CD4-positive, alpha-beta memory T cell (primary cell): ENCODE measurements at regions of chr6 and their contacts with region 1.

Region 1: GRCh38 chr6:96897383-96898240 is at the start of gene NDUFAF4:
- DNase-seq: peak; percentile 94 to 95 (median 94)
- H3K4me3 ChIP-seq: peak within 1 kb of the TSS; percentile 92 to 96
- H3K4me3 Mint-ChIP-seq: peak within 1 kb of the TSS; percentile 86 to 99 (median 98)
- H3K27ac ChIP-seq: peak within 1 kb of the TSS; percentile 92
- H3K27ac Mint-ChIP-seq: peak within 1 kb of the TSS; percentile 73 to 99 (median 98)
- H3K4me1 ChIP-seq: peaks cover 34% of the 10 kb centered on the region
- H3K4me1 Mint-ChIP-seq: peaks cover 17 to 31% (median 23%) of the 10 kb centered on the region in 4 donors
- H3K27me3 ChIP-seq: no peaks in the 10 kb centered on the region
- H3K27me3 Mint-ChIP-seq: peaks cover 2 to 11% of the 10 kb centered on the region in 2 donors
- total RNA-seq, gene NDUFAF4: 24.3 to 27.5 TPM

Region 2: DNA sequence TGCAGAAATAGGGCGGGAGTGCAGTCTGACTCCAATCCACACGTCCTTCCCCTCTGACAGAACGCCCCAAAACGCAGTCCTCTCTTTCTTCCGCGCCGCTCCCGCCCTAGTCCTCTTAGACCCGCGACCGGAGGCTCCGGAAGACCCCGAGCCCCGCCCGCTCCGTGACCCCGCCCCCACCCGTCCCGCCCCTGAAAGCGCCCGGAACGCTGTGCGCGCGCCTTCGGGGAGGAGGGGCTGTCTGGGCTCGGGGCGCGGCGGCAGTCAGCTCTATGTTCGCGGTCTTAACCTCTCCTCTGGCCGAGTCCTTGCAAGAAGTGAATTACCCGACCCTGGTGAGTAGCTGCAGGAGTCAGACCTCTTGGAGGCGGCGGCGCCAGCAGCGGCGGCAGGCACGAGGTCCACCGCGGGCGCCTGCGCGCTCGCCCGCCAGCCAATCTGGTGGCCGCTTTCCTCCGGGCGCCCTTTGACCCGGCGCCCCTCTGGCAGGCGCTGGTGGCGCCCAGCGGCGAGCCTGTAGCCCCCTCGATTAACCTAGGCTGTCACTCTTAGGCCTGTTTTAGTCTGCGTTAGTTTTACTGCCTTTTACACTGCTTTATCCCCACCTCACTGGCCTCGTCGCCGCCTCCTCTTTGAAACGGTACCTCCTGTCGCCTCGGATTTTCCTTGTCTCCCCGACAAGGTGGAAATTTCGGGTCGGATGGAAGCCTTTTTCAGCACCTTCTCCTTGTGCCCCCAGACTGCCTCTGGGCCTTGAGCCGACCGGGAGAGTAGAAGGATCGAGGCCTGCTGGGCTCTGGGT is 1320.1 kb before region 1 on chr6 and contains the start of gene MANEA:
- CTCF ChIA-PET with region 1: no interaction called
- POLR2A ChIA-PET with region 1: no interaction called
- intact Hi-C with region 1: loop called (anchors 1 kb)
- DNase-seq: peak; percentile 81 to 87 (median 82)
- H3K4me3 ChIP-seq: peak within 1 kb of the TSS; percentile 90 to 98
- H3K4me3 Mint-ChIP-seq: peak within 1 kb of the TSS; percentile 94 to 98 (median 97)
- H3K27ac ChIP-seq: peak within 1 kb of the TSS; percentile 86
- H3K27ac Mint-ChIP-seq: peak within 1 kb of the TSS; percentile 94 to 99 (median 97)
- H3K4me1 ChIP-seq: peaks cover 54% of the 10 kb centered on the region
- H3K4me1 Mint-ChIP-seq: peaks cover 32 to 70% (median 46%) of the 10 kb centered on the region in 4 donors
- H3K27me3 ChIP-seq: no peaks in the 10 kb centered on the region
- H3K27me3 Mint-ChIP-seq: no peaks in the 10 kb centered on the region
- total RNA-seq, gene MANEA: 12.2 to 13.0 TPM

Region 3: DNA sequence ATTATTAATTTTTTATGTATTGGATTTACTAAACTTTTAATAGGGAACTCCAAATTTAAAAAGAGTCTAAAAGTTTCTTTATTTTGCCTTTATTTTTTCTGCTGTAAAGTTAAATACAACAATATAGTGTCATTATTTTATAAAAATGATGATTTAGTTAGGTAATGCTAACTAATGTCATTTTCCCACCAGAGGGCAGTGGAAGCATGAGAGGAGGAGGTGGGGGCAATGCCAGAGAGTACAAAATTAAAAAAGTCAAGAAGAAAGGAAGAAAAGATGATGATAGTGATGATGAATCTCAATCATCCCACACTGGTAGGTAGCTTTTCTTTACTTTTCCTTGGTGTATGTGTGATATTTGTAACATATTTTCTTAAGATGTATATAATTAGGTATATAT is 354.9 kb before region 1 on chr6:
- CTCF ChIA-PET with region 1: no interaction called
- POLR2A ChIA-PET with region 1: no interaction called
- intact Hi-C with region 1: loop called (anchors 1 kb)
- DNase-seq: peak in 3 of 5 donors; percentile 7 to 16 (median 10)
- H3K4me3 ChIP-seq: no peak overlapping the region
- H3K4me3 Mint-ChIP-seq: no peak overlapping the region
- H3K27ac ChIP-seq: no peak overlapping the region
- H3K27ac Mint-ChIP-seq: peak overlapping the region in 1 of 7 donors; percentile 45
- H3K4me1 ChIP-seq: no peaks in the 10 kb centered on the region
- H3K4me1 Mint-ChIP-seq: peaks cover 0 to 2% (median 0%) of the 10 kb centered on the region in 4 donors
- H3K27me3 ChIP-seq: no peaks in the 10 kb centered on the region
- H3K27me3 Mint-ChIP-seq: no peaks in the 10 kb centered on the region

Region 4: GRCh38 chr6:96837081-96837971 is 60.3 kb before region 1 on chr6 and contains the start of gene GPR63:
- CTCF ChIA-PET with region 1: interaction called, 3 read pairs
- POLR2A ChIA-PET with region 1: interaction called, 6 read pairs
- intact Hi-C with region 1: loop called (anchors 1 kb)
- DNase-seq: peak; percentile 64 to 78 (median 66)
- H3K4me3 ChIP-seq: peak within 1 kb of the TSS; percentile 2 to 69
- H3K4me3 Mint-ChIP-seq: peak within 1 kb of the TSS; percentile 89 to 96 (median 93)
- H3K27ac ChIP-seq: peak within 1 kb of the TSS; percentile 3
- H3K27ac Mint-ChIP-seq: peak within 1 kb of the TSS; percentile 49 to 87 (median 77)
- H3K4me1 ChIP-seq: peaks cover 18% of the 10 kb centered on the region
- H3K4me1 Mint-ChIP-seq: peaks cover 10 to 33% (median 22%) of the 10 kb centered on the region in 4 donors
- H3K27me3 ChIP-seq: no peaks in the 10 kb centered on the region
- H3K27me3 Mint-ChIP-seq: peaks cover 0 to 12% of the 10 kb centered on the region in 2 donors
- total RNA-seq, gene GPR63: 1.9 TPM

Region 5: DNA sequence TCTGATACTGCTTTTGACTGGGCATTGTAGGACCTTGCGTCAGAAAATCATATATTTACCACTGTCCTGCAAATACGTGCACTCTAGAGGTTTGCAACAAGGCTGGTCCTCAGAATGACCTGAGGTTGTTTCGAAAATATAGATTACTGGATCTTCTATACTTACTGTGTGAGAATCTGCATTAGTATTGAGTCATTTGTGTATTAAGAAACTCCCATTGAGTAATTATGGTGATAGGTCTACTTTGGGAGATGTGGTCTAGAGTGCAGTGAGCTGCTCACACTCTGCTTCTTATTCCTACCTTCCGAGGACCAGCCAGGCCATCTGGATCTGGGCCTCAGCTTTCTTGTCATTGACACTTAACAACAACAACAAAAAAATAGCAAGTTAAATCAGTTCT is 36.5 kb after region 1 on chr6:
- CTCF ChIA-PET with region 1: no interaction called
- POLR2A ChIA-PET with region 1: no interaction called
- intact Hi-C with region 1: no loop called
- DNase-seq: no peak
- H3K4me3 ChIP-seq: no peak overlapping the region
- H3K4me3 Mint-ChIP-seq: no peak overlapping the region
- H3K27ac ChIP-seq: no peak overlapping the region
- H3K27ac Mint-ChIP-seq: no peak overlapping the region
- H3K4me1 ChIP-seq: no peaks in the 10 kb centered on the region
- H3K4me1 Mint-ChIP-seq: no peaks in the 10 kb centered on the region
- H3K27me3 ChIP-seq: no peaks in the 10 kb centered on the region
- H3K27me3 Mint-ChIP-seq: peaks cover 0 to 3% of the 10 kb centered on the region in 2 donors

Region 6: GRCh38 chr6:96947055-96947454 is 49.4 kb after region 1 on chr6:
- CTCF ChIA-PET with region 1: no interaction called
- POLR2A ChIA-PET with region 1: no interaction called
- intact Hi-C with region 1: no loop called
- DNase-seq: peak in 1 of 5 donors; percentile 32
- H3K4me3 ChIP-seq: no peak overlapping the region
- H3K4me3 Mint-ChIP-seq: no peak overlapping the region
- H3K27ac ChIP-seq: no peak overlapping the region
- H3K27ac Mint-ChIP-seq: peak overlapping the region in 2 of 7 donors; percentile 20 to 56
- H3K4me1 ChIP-seq: peaks cover 6% of the 10 kb centered on the region
- H3K4me1 Mint-ChIP-seq: peaks cover 7 to 10% (median 7%) of the 10 kb centered on the region in 4 donors
- H3K27me3 ChIP-seq: no peaks in the 10 kb centered on the region
- H3K27me3 Mint-ChIP-seq: no peaks in the 10 kb centered on the region

Region 7: DNA sequence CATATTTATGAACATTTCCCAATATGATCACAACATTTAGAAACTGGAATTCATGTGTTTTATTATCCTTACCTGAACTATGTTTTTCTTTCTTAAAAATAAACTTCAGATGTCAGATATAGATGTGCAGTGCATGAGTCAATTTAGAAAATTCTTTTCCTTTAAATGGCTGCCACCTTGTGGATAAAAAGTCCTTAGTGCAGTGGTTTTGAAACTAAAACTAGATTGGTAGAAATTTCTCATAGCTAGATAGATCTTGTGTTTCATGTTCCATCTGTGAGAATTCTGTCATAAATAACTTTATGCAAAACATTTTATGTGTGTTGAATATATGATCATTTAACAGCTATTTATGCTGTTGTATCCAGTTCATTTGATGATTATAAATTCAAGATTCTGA is 161.9 kb after region 1 on chr6:
- CTCF ChIA-PET with region 1: no interaction called
- POLR2A ChIA-PET with region 1: no interaction called
- intact Hi-C with region 1: loop called (anchors 2 kb)
- DNase-seq: peak in 4 of 5 donors; percentile 22 to 34 (median 28)
- H3K4me3 ChIP-seq: no peak overlapping the region
- H3K4me3 Mint-ChIP-seq: no peak overlapping the region
- H3K27ac ChIP-seq: no peak overlapping the region
- H3K27ac Mint-ChIP-seq: no peak overlapping the region
- H3K4me1 ChIP-seq: no peaks in the 10 kb centered on the region
- H3K4me1 Mint-ChIP-seq: no peaks in the 10 kb centered on the region
- H3K27me3 ChIP-seq: no peaks in the 10 kb centered on the region
- H3K27me3 Mint-ChIP-seq: no peaks in the 10 kb centered on the region

Region 8: GRCh38 chr6:97394160-97394748 is 496.6 kb after region 1 on chr6:
- CTCF ChIA-PET with region 1: no interaction called
- POLR2A ChIA-PET with region 1: no interaction called
- intact Hi-C with region 1: loop called (anchors 2 kb)
- DNase-seq: peak; percentile 40 to 58 (median 51)
- H3K4me3 ChIP-seq: no peak overlapping the region
- H3K4me3 Mint-ChIP-seq: no peak overlapping the region
- H3K27ac ChIP-seq: no peak overlapping the region
- H3K27ac Mint-ChIP-seq: no peak overlapping the region
- H3K4me1 ChIP-seq: no peaks in the 10 kb centered on the region
- H3K4me1 Mint-ChIP-seq: no peaks in the 10 kb centered on the region
- H3K27me3 ChIP-seq: no peaks in the 10 kb centered on the region
- H3K27me3 Mint-ChIP-seq: peaks cover 6 to 8% of the 10 kb centered on the region in 2 donors